HCT116 (cell line): ENCODE measurements at regions of chr16 and their contacts with region 1.

Region 1: DNA sequence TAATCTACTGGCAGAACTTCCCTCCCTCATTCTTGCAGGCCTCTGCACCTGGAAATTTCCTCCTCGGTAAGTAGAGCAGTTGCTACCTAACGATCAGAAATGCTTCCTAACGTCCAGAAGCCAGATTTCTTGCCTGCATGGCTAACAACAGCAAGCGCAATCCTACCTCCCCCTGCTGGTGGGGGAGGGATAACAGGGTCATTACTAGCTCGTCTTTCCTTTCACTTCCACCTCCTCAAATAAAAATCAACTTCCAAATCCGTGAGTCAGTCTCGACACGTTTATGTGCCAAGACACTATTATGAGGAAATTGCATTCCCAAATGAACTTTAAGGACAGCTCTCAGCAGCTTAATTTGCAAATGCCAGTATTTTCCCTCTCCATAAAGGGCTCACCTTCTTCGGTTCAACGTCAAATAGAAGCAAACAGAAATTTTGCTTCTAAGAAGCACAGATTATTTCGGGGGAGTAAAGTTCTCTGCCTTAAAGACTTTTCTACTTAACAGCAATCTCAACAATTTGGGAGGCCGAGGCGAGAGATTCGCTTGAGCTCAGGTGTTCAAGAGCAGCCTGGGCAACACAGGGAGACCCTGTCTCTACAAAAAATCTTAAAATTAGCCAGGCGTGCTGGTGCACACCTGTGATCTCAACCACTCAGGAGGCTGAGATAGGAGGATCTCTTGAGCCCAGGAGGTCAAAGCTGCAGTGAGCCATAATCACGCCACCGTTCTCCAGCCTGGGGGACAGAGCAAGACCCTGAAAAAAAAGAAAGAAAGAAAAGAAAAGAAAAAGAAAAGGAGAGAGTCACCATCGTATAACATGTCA is 188.6 kb upstream of the PSMD7 start:
- DNase-seq: peak; percentile 58
- ATAC-seq: peak; percentile 94
- H3K4me3 ChIP-seq: peak overlapping the region in 1 of 2 experiments; percentile 39; a peak in 3 of 4 replicates
- H3K27ac ChIP-seq: no peak overlapping the region
- H3K4me1 ChIP-seq: peaks cover 3 to 8% of the 10 kb centered on the region in 2 experiments; a peak in 2 of 4 replicates
- H3K27me3 ChIP-seq: no peaks in the 10 kb centered on the region
- CTCF ChIP-seq: peak; percentile 38 to 96 (median 86); a peak in 5 of 6 replicates
- POLR2A ChIP-seq: no peak
- RAD21 ChIP-seq: peak; percentile 59

Region 2: GRCh38 chr16:74034862-74035261 is 73.1 kb before region 1 on chr16:
- CTCF ChIA-PET with region 1: interaction called, 13 read pairs
- POLR2A ChIA-PET with region 1: no interaction called
- RAD21 ChIA-PET with region 1: no interaction called
- intact Hi-C with region 1: no loop called
- DNase-seq: peak; percentile 1
- ATAC-seq: peak; percentile 57; the same call in 1 of the 2 replicates
- H3K4me3 ChIP-seq: no peak overlapping the region
- H3K27ac ChIP-seq: no peak overlapping the region
- H3K4me1 ChIP-seq: no peaks in the 10 kb centered on the region
- H3K27me3 ChIP-seq: peaks cover 54% of the 10 kb centered on the region
- CTCF ChIP-seq: peak in 2 of 3 experiments; percentile 28 to 48; a peak in 4 of 6 replicates
- POLR2A ChIP-seq: no peak
- RAD21 ChIP-seq: peak; percentile 48

Region 3: DNA sequence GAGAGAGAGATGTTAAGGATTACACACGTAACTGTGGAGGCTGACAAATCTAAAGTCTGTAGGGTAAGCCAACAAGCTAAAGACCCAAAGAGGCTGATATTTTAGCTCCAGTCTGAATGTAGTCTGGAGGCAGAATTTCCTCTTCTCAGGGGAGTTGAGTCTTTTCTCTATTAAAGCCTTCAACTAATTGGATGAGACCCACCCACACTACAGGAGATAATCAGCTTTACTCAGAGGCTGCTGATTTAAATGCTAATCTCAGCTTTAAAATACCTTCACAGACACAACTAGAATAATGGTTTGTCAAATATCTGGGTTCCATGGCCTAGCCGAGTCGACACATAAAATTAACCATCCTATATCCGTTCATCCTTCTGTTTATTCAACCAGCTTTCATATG is 15.7 kb before region 1 on chr16:
- CTCF ChIA-PET with region 1: interaction called, 11 read pairs
- POLR2A ChIA-PET with region 1: no interaction called
- RAD21 ChIA-PET with region 1: no interaction called
- intact Hi-C with region 1: no loop called
- DNase-seq: no peak
- ATAC-seq: no peak
- H3K4me3 ChIP-seq: no peak overlapping the region
- H3K27ac ChIP-seq: no peak overlapping the region
- H3K4me1 ChIP-seq: no peaks in the 10 kb centered on the region
- H3K27me3 ChIP-seq: no peaks in the 10 kb centered on the region
- CTCF ChIP-seq: no peak
- POLR2A ChIP-seq: no peak
- RAD21 ChIP-seq: no peak